ENCODE measurements at regions of chr17 and their contacts with region 1.

Region 1: DNA sequence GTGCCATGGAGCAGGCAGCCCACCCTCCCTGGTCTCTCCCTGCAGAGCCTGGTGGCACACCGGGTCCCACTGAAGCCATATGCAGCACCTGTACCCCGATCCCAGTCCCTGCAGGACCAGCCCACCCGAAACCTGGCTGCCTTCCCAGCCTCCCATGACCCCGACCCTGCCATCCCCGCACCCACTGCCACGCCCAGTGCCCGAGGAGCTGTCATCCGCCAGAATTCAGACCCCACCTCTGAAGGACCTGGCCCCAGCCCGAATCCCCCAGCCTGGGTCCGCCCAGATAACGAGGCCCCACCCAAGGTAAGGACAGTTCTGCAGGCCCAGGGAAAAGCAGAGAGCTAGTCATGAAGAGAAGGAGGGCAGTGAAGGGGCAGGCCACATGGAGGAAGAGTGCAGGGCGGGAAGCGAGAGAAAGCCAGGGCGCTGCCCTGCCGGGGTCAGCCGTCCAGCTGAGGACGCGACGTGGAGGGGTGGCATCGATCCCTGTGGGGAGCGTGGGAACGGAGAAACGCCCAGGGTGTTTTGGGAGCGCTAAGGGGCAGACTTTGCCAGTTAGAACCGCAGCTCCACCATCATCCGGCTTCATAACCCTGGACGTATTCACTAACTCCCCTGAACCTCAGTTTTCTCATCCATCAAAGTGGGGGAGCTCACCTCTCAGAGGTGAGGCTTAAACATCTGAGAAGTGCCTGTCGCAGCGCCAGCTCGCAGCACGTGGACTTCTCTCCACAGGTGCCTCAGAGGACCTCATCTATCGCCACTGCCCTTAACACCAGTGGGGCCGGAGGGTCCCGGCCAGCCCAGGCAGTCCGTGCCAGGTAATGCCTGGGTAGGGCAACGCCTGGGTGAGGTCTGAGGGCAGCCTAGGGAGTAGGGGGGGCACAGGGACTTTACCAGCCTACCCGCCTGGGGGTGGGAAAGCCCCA is 7.7 kb upstream of the C17orf107 start:
- DNase-seq: no peak
- ATAC-seq: no peak
- H3K4me3 ChIP-seq: no peak overlapping the region
- H3K27ac ChIP-seq: no peak overlapping the region
- H3K4me1 ChIP-seq: no peaks in the 10 kb centered on the region
- H3K27me3 ChIP-seq: no peaks in the 10 kb centered on the region
- CTCF ChIP-seq: no peak
- POLR2A ChIP-seq: no peak
- RAD21 ChIP-seq: no peak

Region 2: DNA sequence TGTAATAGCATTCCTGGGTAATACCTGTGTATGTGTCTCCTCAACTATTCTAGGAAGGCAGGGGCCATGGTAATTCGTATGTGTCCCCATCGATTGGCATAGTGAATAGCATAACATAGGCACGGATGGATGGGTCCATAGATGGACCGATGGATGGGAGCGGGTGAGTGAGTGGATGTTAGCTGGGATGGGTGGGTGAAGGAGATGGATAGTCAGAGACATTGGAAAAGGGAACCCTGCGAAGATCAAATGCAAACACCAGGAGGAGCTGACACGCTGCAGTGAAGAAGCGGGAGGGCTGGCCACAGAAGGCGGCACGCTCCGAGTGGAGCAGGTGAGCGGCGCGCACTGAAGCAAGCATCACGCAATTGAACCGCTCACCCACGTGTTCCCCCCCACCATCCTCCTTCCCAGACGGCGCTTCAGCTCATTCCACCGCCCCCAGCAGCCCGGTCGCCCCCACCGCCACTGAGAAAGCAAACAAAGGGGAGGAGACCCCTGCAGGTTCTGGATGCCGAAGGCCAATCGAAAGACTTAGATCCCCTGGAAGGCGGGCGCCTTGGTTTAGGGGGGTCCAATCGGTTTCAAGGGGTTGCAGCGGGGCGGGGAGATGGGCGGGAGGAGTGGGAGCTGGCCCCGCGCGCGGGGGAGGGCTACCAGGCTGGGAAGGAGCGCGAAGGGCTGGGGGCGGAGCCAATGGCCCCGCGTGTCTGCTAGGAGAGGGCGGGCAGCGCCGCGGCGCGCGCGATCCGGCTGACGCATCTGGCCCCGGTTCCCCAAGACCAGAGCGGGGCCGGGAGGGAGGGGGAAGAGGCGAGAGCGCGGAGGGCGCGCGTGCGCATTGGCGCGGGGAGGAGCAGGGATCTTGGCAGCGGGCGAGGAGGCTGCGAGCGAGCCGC is 181.6 kb before region 1 on chr17 and contains the start of gene ARRB2:
- CTCF ChIA-PET with region 1: no interaction called
- POLR2A ChIA-PET with region 1: no interaction called
- dilution Hi-C with region 1: no loop called
- in situ Hi-C with region 1: loop called (anchors 10 kb)
- intact Hi-C with region 1: loop called (anchors 1 kb)
- DNase-seq: peak; percentile 98
- ATAC-seq: peak; percentile 96
- H3K4me3 ChIP-seq: peak within 1 kb of the TSS; percentile 49
- H3K27ac ChIP-seq: no peak within 1 kb of the TSS; the same call in 1 of the 2 replicates
- H3K4me1 ChIP-seq: peaks cover 9% of the 10 kb centered on the region
- H3K27me3 ChIP-seq: no peaks in the 10 kb centered on the region
- CTCF ChIP-seq: peak; percentile 77
- POLR2A ChIP-seq: no peak
- RAD21 ChIP-seq: peak; percentile 80
- total RNA-seq, gene ARRB2: 3.9 and 6.1 TPM in 2 replicates

Region 3: GRCh38 chr17:4733073-4733531 is 158.6 kb before region 1 on chr17:
- CTCF ChIA-PET with region 1: no interaction called
- POLR2A ChIA-PET with region 1: no interaction called
- dilution Hi-C with region 1: no loop called
- in situ Hi-C with region 1: no loop called
- intact Hi-C with region 1: loop called (anchors 2 kb)
- DNase-seq: no peak
- ATAC-seq: no peak
- H3K4me3 ChIP-seq: no peak overlapping the region
- H3K27ac ChIP-seq: no peak overlapping the region
- H3K4me1 ChIP-seq: no peaks in the 10 kb centered on the region
- H3K27me3 ChIP-seq: peaks cover 4% of the 10 kb centered on the region
- CTCF ChIP-seq: 0 out of 2 replicates have a peak, but pooled peaks have one; percentile 2
- POLR2A ChIP-seq: no peak
- RAD21 ChIP-seq: no peak

Region 4: GRCh38 chr17:4849011-4849536 is 42.6 kb before region 1 on chr17:
- CTCF ChIA-PET with region 1: no interaction called
- POLR2A ChIA-PET with region 1: no interaction called
- dilution Hi-C with region 1: no loop called
- in situ Hi-C with region 1: no loop called
- intact Hi-C with region 1: no loop called
- DNase-seq: no peak
- ATAC-seq: no peak
- H3K4me3 ChIP-seq: no peak overlapping the region
- H3K27ac ChIP-seq: no peak overlapping the region
- H3K4me1 ChIP-seq: peaks cover 12% of the 10 kb centered on the region
- H3K27me3 ChIP-seq: no peaks in the 10 kb centered on the region
- CTCF ChIP-seq: no peak
- POLR2A ChIP-seq: no peak
- RAD21 ChIP-seq: no peak

Region 5: GRCh38 chr17:5325851-5326250 is 434.2 kb after region 1 on chr17:
- CTCF ChIA-PET with region 1: no interaction called
- POLR2A ChIA-PET with region 1: no interaction called
- dilution Hi-C with region 1: no loop called
- in situ Hi-C with region 1: no loop called
- intact Hi-C with region 1: no loop called
- DNase-seq: no peak
- ATAC-seq: no peak
- H3K4me3 ChIP-seq: no peak overlapping the region
- H3K27ac ChIP-seq: no peak overlapping the region
- H3K4me1 ChIP-seq: peaks cover 3% of the 10 kb centered on the region
- H3K27me3 ChIP-seq: no peaks in the 10 kb centered on the region
- CTCF ChIP-seq: no peak
- POLR2A ChIP-seq: no peak
- RAD21 ChIP-seq: no peak

Measured in IMR-90 (cell line).